ENCODE measurements at regions of chr15 and their contacts with region 1.

Region 1: DNA sequence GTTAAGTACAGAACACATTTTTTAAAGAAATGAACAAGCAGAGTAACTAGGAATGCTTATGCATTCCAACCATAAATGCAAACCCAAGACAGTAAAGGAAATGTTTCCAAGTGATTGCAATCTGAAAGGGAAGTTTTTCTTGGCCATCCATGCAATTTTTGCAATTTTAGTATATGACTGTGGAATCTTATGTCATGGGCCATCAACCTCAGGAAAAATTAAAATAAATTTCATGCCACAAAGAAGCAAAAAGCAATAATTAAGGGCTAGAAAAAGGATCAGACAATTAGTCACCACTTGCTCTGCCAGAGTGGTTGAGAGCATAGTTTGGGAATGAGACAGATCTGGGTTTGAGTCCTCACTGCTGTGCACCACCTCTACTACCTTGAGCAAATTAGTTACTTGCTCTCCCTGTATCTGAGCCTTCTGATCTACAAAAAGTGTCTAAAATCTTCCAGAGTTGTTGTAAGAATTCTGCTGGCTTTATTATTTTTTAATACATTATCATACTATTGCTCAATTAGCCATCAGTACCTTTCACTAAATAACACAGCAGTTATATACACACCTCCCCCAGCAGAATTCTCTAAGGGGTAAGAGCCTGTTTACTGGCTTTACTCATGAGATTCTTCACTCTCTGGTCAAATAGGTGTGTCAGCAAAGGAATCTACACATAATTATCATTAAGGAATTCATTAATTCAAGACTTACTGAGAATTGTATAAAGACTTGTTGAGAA is 49.7 kb upstream of the FBN1 start:
- DNase-seq: no peak

Region 2: GRCh38 chr15:48759921-48760320 is 64.7 kb after region 1 on chr15:
- intact Hi-C with region 1: loop called in 1 of 2 experiments (anchors 2 kb)
- DNase-seq: no peak

Measured in posterior vena cava (tissue), 2 donors.